BJ (cell line): ENCODE measurements at regions of chr2 and their contacts with region 1.

Region 1: DNA sequence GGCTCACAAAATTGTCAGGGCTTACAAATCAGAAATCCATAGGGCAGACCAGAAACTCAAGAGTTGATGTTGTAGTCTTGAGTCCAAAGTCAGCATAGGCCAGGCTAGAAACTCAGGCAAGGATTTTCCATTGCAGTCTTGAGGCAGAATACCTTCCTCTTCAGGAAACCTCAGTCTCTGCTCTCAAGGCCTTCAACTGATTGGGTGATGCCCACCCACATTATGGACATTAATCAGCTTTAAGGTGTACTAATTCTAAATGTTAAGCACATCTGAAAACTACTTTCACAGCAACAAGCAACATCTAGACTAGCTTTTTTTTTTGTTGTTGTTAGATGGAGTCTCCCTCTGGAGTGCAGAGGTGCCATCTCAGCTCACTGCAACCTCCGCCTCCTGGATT is 31.3 kb upstream of the ZNF512 start:
- DNase-seq: no peak
- H3K4me3 ChIP-seq: no peak overlapping the region
- H3K27me3 ChIP-seq: peaks cover 5% of the 10 kb centered on the region
- CTCF ChIP-seq: no peak

Region 2: DNA sequence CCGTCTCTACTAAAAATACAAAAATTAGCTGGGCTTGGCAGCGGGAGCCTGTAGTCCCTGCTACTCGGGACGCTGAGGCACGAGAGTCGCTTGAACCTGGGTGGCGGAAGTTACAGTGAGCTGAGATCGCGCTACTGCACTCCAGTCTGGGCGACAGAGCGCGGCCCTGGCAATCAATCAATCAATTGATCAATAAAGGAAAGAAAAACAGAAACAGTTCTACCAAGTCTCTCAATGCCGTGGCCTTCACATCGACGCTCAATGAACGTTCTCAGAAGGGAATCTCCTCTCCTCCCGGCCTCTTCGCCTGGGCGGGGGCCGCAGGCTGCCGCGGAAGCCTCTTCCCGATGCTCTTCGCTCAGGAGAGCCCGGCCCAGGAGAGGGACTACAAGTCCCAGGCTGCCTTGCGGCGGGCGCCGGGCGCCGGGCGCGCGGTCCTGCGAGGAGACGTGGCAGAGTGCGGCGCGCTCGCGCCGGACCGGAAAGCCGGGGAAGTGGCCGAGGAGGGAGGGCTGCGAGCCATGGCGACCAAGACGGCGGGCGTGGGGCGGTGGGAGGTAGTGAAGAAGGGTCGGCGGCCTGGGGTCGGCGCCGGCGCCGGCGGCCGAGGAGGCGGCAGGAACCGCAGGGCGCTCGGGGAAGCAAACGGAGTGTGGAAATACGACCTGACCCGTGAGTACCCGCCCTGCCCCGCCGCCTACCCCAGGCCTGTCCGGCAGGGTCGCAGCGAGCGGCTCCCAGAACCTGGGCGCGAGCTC is 518.8 kb before region 1 on chr2 and contains the start of gene TMEM214:
- CTCF ChIA-PET with region 1: no interaction called
- POLR2A ChIA-PET with region 1: no interaction called
- DNase-seq: peak; percentile 51
- H3K4me3 ChIP-seq: peak within 1 kb of the TSS; percentile 92
- H3K27me3 ChIP-seq: no peaks in the 10 kb centered on the region
- CTCF ChIP-seq: peak; percentile 13; the same call in 1 of the 2 replicates
- polyA plus RNA-seq, gene TMEM214: 145 and 235 TPM in 2 replicates

Region 3: DNA sequence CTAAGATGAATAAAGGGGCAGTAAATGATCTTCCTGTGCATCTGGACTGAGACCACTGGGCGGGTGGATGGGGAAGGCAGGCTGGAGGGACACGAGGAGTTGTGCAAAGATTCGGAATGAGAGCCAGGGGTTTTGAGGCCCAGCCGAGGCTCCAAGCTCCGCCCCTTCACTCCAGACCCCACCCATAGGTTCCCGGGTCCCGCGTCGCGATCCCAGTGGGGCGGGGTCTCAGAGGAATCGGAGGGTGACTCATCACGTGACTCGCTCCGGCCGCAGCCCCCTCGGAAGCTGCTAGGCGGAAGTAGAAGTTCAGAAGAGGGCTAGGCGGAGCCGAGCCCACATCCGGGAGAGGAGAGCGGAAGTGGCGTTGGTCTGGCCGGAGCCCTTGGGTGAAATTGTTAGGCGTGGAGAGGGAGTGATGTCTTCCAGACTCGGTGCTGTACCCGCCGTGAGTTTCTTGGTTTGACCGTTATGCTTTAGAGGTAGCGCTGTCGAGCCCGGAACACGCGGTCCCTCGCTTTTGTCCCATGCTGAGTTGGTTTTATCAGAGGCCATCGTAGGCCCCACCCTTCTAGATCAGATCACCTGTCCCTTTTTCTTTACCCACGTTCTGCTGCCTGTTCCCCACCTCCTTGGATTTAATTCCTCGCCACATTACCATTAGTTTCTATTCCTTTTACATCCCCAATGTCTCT is 31.3 kb after region 1 on chr2 and contains the start of gene ZNF512:
- CTCF ChIA-PET with region 1: no interaction called
- POLR2A ChIA-PET with region 1: interaction called, 10 read pairs
- DNase-seq: peak; percentile 52
- H3K4me3 ChIP-seq: peak within 1 kb of the TSS; percentile 48
- H3K27me3 ChIP-seq: no peaks in the 10 kb centered on the region
- CTCF ChIP-seq: no peak
- polyA plus RNA-seq, gene ZNF512: 19.2 and 31.8 TPM in 2 replicates

Region 4: GRCh38 chr2:27628767-27629709 is 77.5 kb after region 1 on chr2 and contains the starts of genes CCDC121 and GPN1:
- CTCF ChIA-PET with region 1: no interaction called
- POLR2A ChIA-PET with region 1: no interaction called
- DNase-seq: peak; percentile 73
- H3K4me3 ChIP-seq: peak within 1 kb of the TSS; percentile 69
- H3K27me3 ChIP-seq: no peaks in the 10 kb centered on the region
- CTCF ChIP-seq: no peak
- polyA plus RNA-seq, gene CCDC121: 0.58 and 0.86 TPM in 2 replicates
- polyA plus RNA-seq, gene GPN1: 40.8 and 61.0 TPM in 2 replicates

Region 5: DNA sequence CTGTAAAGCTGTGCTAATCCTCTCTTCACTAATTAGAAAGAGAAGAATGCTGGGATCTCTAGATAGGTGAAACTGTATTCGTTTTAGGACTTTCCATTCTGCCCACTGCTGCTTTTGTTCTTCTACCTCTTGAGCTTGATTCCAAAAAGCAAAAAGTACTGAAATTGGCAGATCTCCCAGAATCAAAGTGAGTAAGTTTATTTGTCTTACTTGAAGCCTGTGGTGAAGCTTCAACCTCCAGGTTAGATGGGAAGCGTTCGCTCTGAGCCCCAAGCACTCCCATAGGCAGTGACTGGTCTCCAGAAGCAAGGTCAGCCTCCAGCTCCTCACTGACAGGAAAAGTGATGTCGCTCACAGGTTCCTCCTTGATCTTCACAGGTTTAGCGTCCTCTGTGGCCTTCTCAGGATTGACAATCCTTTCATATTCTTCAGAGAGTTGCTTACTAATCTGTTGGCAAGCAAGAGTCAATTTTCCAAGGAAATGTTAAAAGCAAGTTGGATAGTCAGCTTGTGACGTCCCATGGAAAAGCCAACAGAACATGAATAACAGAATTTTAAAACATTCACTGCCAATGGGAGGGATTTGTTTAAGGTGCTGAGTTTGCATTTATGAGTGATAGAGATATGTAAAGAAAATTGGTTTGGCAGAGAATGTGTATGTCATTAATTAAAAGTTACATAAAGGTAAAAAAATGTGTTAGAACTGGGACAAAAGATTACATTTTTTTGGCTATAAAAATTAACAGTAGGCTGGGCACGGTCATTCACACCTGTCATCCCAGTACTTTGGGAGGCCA is 103.8 kb after region 1 on chr2:
- CTCF ChIA-PET with region 1: no interaction called
- POLR2A ChIA-PET with region 1: no interaction called
- DNase-seq: no peak
- H3K4me3 ChIP-seq: no peak overlapping the region
- H3K27me3 ChIP-seq: no peaks in the 10 kb centered on the region
- CTCF ChIP-seq: no peak